ENCODE measurements at regions of chr5 and their contacts with region 1.

Region 1: GRCh38 chr5:59351076-59351794 is 542.3 kb downstream of the PDE4D start:
- DNase-seq: peak; percentile 49 to 61
- ATAC-seq: peak; percentile 94 to 97
- H3K4me3 ChIP-seq: peak overlapping the region in 1 of 4 donors; percentile 57
- H3K27ac ChIP-seq: peak overlapping the region; percentile 81 to 86 (median 83)
- H3K4me1 ChIP-seq: peaks cover 68 to 86% of the 10 kb centered on the region in 2 donors
- H3K27me3 ChIP-seq: no peaks in the 10 kb centered on the region
- CTCF ChIP-seq: peak in 2 of 5 experiments; percentile 32 to 46
- POLR2A ChIP-seq: no peak

Region 2: DNA sequence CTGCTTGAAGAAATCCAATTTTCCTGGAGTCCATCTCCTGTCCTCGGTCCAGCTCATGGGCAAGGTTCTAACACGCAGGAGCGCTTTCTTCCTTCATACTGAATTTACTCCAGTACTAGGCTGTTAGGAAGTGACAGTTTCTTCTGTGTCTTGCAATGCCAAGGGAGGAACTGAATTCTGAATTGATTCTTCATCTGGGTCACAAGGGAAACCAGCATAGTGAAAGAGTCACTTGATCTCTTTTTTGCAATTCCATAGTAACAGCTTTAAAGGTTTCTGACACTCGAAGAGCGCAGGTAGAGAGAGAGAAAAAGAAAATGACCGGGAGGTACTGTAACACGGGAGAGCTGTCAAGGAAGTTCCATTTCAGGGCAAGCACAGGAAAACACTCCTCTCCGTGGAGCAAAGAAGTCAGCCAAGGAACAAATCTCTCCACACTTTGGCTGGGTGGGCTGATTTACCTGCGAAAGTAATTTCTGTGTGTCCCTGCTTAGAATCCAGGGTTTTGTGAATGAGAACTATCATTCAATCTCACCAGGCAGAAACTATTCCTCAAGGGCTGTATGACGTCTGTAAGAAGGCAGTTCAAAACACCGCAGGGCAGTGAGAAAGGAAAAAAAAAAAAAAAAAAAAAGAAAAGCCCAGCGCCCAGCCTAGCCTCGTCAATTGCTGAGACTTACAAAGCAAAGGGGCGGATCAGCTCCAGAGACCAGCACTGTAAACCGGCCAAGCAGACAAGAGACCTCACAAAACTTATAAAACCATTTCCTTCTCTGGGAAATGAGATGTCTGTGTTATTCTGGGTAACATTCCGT is 75.5 kb before region 1 on chr5:
- in situ Hi-C with region 1: no loop called
- intact Hi-C with region 1: loop called (anchors 5 kb)
- DNase-seq: no peak
- ATAC-seq: peak; percentile 61 to 63
- H3K4me3 ChIP-seq: peak overlapping the region; percentile 39 to 48 (median 44)
- H3K27ac ChIP-seq: peak overlapping the region; percentile 54 to 80 (median 62)
- H3K4me1 ChIP-seq: peaks cover 61 to 74% of the 10 kb centered on the region in 2 donors
- H3K27me3 ChIP-seq: no peaks in the 10 kb centered on the region
- CTCF ChIP-seq: no peak
- POLR2A ChIP-seq: peak in 1 of 2 donors; percentile 13